AG04450 (cell line): ENCODE measurements at regions of chr1 and their contacts with region 1.

Region 1: GRCh38 chr1:109483672-109484518 is at the start of gene ATXN7L2:
- DNase-seq: peak; percentile 74
- H3K4me3 ChIP-seq: peak within 1 kb of the TSS; percentile 84
- H3K27ac ChIP-seq: peak within 1 kb of the TSS; percentile 81
- H3K27me3 ChIP-seq: peaks cover 20% of the 10 kb centered on the region
- CTCF ChIP-seq: no peak
- polyA plus RNA-seq, gene ATXN7L2: 1.5 TPM in 2 replicates

Region 2: GRCh38 chr1:109190189-109190588 is 293.7 kb before region 1 on chr1:
- CTCF ChIA-PET with region 1: no interaction called
- POLR2A ChIA-PET with region 1: interaction called, 11 read pairs
- DNase-seq: no peak
- H3K4me3 ChIP-seq: no peak overlapping the region
- H3K27ac ChIP-seq: no peak overlapping the region
- H3K27me3 ChIP-seq: no peaks in the 10 kb centered on the region
- CTCF ChIP-seq: no peak

Region 3: DNA sequence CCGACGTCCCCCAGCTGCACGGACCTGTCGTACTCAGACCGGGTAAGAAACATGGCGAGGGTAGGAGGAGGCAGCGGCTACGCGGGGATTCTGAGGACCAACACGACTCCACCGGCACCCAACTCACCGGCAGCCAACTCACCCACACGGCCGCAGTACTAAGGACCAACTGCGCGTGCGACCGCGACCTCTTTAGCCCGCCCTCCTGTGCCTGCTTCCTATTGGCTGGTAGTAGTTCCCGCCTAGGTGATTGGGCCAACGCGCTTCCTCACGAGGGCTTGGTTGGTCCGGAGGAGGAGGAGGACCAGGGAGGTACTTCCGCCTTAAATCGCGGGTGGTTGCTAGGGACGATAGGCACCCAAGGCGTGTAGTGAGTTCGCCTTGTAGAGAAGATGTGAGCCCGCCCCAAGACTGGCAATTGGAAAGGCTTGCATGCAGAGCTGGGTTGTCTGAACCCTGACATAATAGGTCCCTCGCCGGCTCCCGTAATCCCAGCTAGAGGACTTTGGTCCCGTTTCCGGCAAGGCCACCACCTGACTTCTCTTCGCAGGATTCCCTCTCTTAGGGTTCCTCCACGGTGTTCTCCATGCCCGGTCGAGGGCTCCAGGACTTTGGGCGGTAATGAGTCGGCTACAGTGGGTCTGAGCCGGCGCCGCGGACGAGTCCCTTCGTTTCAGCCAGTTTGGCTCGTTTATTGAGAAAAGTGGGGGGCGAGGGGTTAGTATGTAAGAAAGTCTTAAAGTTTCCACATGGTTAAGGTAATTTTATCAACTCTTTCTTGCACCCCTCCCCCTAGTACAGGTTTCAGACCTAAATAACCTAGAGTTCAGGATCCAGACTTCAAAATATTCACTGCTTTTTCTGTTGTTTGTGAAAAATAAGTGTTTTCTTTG is 57.4 kb before region 1 on chr1 and contains the start of gene PSMA5:
- CTCF ChIA-PET with region 1: no interaction called
- POLR2A ChIA-PET with region 1: interaction called, 12 read pairs
- DNase-seq: peak; percentile 98
- H3K4me3 ChIP-seq: peak within 1 kb of the TSS; percentile 95
- H3K27ac ChIP-seq: peak within 1 kb of the TSS; percentile 89
- H3K27me3 ChIP-seq: no peaks in the 10 kb centered on the region
- CTCF ChIP-seq: no peak
- polyA plus RNA-seq, gene PSMA5: 127 and 151 TPM in 2 replicates

Region 4: DNA sequence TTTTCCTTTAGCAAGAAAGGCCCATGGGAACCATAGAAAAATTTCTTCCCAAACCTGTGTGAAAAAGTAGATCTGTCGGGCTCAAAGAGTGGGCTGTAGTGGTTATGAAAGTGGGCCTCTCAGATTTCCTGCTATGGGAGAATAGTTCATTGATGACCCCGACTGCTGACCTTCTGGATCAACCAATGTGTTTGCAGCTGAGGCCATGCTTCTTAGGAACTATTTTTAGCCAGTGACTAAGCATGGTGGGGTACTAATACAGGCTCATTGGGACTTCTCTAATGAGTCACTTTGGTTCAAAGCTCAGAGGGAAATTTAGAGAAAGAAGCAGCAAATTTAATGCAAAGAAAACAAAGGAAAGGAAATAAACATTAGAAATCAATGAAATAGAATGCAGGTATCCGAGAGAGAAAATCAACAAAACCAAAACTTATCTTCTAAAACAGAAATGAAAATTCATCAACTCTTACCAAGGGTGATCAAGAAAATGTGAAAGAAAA is 45.0 kb before region 1 on chr1:
- CTCF ChIA-PET with region 1: no interaction called
- POLR2A ChIA-PET with region 1: no interaction called
- DNase-seq: peak; percentile 84
- H3K4me3 ChIP-seq: no peak overlapping the region
- H3K27ac ChIP-seq: peak overlapping the region; percentile 88
- H3K27me3 ChIP-seq: no peaks in the 10 kb centered on the region
- CTCF ChIP-seq: no peak

Region 5: DNA sequence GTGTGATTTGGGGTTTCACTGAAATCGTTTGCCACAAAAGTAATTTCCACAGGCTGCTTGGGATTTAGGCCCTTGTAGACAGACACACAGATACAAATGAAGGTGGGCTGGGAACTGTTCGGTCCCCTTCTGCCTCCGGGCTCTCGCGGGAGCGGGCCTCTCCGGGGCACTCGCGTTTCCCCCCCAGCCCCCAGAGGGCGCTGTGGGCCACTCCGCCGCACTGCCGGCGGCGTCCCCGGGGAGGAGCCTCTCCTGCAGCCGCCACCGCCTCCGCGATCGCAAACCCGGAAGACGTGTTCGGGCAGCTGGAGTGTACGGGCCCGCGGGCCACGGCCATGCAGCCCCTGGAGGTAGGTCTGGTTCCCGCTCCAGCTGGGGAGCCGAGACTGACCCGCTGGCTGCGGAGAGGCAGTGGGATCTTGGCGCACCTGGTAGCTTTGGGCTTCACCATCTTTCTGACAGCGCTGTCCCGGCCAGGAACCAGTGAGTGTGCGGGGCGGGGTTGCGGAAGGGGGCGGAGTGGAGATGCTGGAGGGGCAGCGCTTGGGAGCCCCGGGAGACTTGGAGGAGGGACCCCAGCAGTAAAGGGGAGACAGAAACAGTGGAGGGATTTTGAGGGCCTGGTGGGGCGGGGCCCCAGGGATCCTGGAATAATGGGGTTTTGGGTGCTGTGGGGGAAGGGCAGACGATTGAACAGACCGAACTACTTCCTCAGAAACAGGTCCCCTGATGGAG is 10.1 kb after region 1 on chr1 and contains the start of gene CYB561D1:
- CTCF ChIA-PET with region 1: interaction called, 19 read pairs
- POLR2A ChIA-PET with region 1: interaction called, 4 read pairs
- DNase-seq: no peak
- H3K4me3 ChIP-seq: peak within 1 kb of the TSS; percentile 98
- H3K27ac ChIP-seq: peak within 1 kb of the TSS; percentile 11
- H3K27me3 ChIP-seq: no peaks in the 10 kb centered on the region
- CTCF ChIP-seq: peak; percentile 88
- polyA plus RNA-seq, gene CYB561D1: 5.0 and 5.4 TPM in 2 replicates

Region 6: GRCh38 chr1:109499661-109500536 is 16.0 kb after region 1 on chr1:
- CTCF ChIA-PET with region 1: interaction called, 12 read pairs
- POLR2A ChIA-PET with region 1: no interaction called
- DNase-seq: no peak
- H3K4me3 ChIP-seq: no peak overlapping the region
- H3K27ac ChIP-seq: peak overlapping the region; percentile 47
- H3K27me3 ChIP-seq: no peaks in the 10 kb centered on the region
- CTCF ChIP-seq: peak; percentile 51